ENCODE measurements at regions of chr11 and their contacts with region 1.

Region 1: DNA sequence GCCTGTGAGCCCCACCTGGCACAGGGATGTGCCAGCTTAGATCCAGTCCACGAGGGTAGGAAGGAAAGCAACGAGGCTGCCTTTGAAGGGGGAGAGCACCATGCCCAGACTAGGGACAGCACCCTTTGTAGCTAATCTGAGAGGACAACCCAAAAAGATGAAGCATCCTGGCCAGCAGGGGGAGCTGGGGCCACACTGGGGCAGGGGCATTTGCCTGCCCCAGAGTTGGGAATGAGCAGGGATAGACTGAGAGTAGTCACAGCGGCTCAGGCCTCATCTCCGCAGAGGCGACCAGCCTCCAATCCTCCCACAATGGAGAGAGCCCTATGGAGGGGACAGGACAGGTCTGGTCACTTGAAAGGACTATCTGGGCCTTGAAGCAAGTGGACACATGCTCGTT is 16.4 kb downstream of the LMO1 start:
- DNase-seq: no peak
- ATAC-seq: peak; percentile 73 to 84
- H3K4me3 ChIP-seq: no peak overlapping the region
- H3K27ac ChIP-seq: no peak overlapping the region
- H3K4me1 ChIP-seq: no peaks in the 10 kb centered on the region
- CTCF ChIP-seq: peak; percentile 52
- EP300 ChIP-seq: no peak
- POLR2A ChIP-seq: no peak
- RAD21 ChIP-seq: peak; percentile 37 to 58; a peak in 4 of 5 replicates

Region 2: DNA sequence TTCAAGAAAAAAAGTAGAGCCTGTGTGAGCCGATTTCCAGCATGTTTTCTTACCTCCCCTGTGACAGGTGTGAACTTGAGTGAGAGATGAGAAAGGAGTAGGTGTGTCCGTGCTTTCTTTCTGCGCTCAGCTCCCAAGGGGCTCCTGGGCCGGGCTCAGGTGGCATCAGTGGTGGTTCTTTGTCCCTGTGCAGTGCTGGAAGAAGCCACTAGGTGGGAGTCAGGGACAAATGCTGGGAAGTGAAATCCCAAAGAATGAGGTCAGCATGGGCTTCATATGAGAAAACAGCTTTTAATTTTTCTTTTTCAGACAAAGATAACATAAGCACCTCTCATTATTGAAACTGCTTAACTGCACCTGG is 675.7 kb before region 1 on chr11:
- CTCF ChIA-PET with region 1: no interaction called
- POLR2A ChIA-PET with region 1: no interaction called
- DNase-seq: peak; percentile 74 to 79
- ATAC-seq: peak; percentile 75 to 83
- H3K4me3 ChIP-seq: no peak overlapping the region
- H3K27ac ChIP-seq: peak overlapping the region; percentile 85 to 88
- H3K4me1 ChIP-seq: peaks cover 56% of the 10 kb centered on the region
- CTCF ChIP-seq: peak; percentile 98
- EP300 ChIP-seq: no peak
- POLR2A ChIP-seq: no peak
- RAD21 ChIP-seq: peak; percentile 98 to 99

Region 3: GRCh38 chr11:8099291-8099899 is 147.9 kb before region 1 on chr11:
- CTCF ChIA-PET with region 1: no interaction called
- POLR2A ChIA-PET with region 1: no interaction called
- DNase-seq: peak; percentile 56 to 80
- ATAC-seq: peak; percentile 82 to 92
- H3K4me3 ChIP-seq: no peak overlapping the region
- H3K27ac ChIP-seq: no peak overlapping the region
- H3K4me1 ChIP-seq: no peaks in the 10 kb centered on the region
- CTCF ChIP-seq: peak; percentile 85
- EP300 ChIP-seq: no peak
- POLR2A ChIP-seq: no peak
- RAD21 ChIP-seq: peak; percentile 86

Region 4: GRCh38 chr11:8225589-8226036 is 21.7 kb before region 1 on chr11:
- CTCF ChIA-PET with region 1: interaction called, 424 read pairs
- POLR2A ChIA-PET with region 1: no interaction called
- DNase-seq: peak; percentile 58 to 88
- ATAC-seq: peak; percentile 32 to 85; a peak in 4 of 6 replicates
- H3K4me3 ChIP-seq: no peak overlapping the region
- H3K27ac ChIP-seq: 0 out of 6 replicates have a peak overlapping the region, but pooled peaks of 1 of the 2 experiments have one; percentile 24
- H3K4me1 ChIP-seq: peaks cover 26% of the 10 kb centered on the region
- CTCF ChIP-seq: peak; percentile 91
- EP300 ChIP-seq: no peak
- POLR2A ChIP-seq: no peak
- RAD21 ChIP-seq: peak; percentile 94 to 95

Measured in A549 (cell line).